Activated CD8-positive, alpha-beta T cell treated with anti-CD3 and anti-CD28 coated beads, Interleukin-2, amount 10 ng/mL, durations not matched to agents 7 days and 5 days (primary cell): ENCODE measurements at regions of chr2 and their contacts with region 1.

Region 1: DNA sequence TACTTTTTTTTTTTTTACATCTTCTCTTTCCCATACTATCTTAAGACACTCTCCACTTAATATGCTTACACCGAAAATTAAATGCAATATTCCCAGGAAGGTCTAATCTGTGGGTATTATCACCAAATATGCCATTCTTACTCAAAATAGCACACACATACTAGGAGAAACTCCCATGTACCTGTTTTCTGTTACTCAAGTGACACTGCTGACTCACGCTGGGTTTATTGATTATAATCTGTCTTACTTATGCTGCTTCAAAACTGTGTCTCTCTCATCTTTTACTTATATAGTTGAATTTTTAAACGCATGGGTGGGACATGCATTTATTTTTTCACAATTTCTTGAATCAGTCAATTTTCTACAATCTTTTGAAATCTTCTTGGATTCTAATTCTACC is 29.9 kb downstream of the MRPL19 start:
- DNase-seq: no peak
- ATAC-seq: no peak
- H3K4me3 Mint-ChIP-seq: no peak overlapping the region
- H3K27ac Mint-ChIP-seq: no peak overlapping the region
- H3K4me1 Mint-ChIP-seq: peaks cover 9% of the 10 kb centered on the region
- H3K27me3 Mint-ChIP-seq: no peaks in the 10 kb centered on the region

Region 2: GRCh38 chr2:75640621-75641121 is 35.8 kb before region 1 on chr2:
- CTCF ChIA-PET with region 1: interaction called, 49 read pairs
- POLR2A ChIA-PET with region 1: no interaction called
- DNase-seq: peak; percentile 61
- ATAC-seq: peak; percentile 93
- H3K4me3 Mint-ChIP-seq: no peak overlapping the region
- H3K27ac Mint-ChIP-seq: no peak overlapping the region
- H3K4me1 Mint-ChIP-seq: no peaks in the 10 kb centered on the region
- H3K27me3 Mint-ChIP-seq: peaks cover 15% of the 10 kb centered on the region

Region 3: GRCh38 chr2:75646583-75647425 is 29.7 kb before region 1 on chr2 and contains the start of gene MRPL19:
- CTCF ChIA-PET with region 1: interaction called, 49 read pairs
- POLR2A ChIA-PET with region 1: interaction called, 3 read pairs
- DNase-seq: peak; percentile 84
- ATAC-seq: peak; percentile 98
- H3K4me3 Mint-ChIP-seq: peak within 1 kb of the TSS; percentile 93
- H3K27ac Mint-ChIP-seq: peak within 1 kb of the TSS; percentile 92
- H3K4me1 Mint-ChIP-seq: peaks cover 30% of the 10 kb centered on the region
- H3K27me3 Mint-ChIP-seq: no peaks in the 10 kb centered on the region
- total RNA-seq, gene MRPL19: 39.5 to 42.4 TPM

Region 4: GRCh38 chr2:75655861-75656260 is 20.6 kb before region 1 on chr2:
- CTCF ChIA-PET with region 1: interaction called, 14 read pairs
- POLR2A ChIA-PET with region 1: no interaction called
- DNase-seq: no peak
- ATAC-seq: no peak
- H3K4me3 Mint-ChIP-seq: no peak overlapping the region
- H3K27ac Mint-ChIP-seq: no peak overlapping the region
- H3K4me1 Mint-ChIP-seq: peaks cover 3% of the 10 kb centered on the region
- H3K27me3 Mint-ChIP-seq: no peaks in the 10 kb centered on the region

Region 5: DNA sequence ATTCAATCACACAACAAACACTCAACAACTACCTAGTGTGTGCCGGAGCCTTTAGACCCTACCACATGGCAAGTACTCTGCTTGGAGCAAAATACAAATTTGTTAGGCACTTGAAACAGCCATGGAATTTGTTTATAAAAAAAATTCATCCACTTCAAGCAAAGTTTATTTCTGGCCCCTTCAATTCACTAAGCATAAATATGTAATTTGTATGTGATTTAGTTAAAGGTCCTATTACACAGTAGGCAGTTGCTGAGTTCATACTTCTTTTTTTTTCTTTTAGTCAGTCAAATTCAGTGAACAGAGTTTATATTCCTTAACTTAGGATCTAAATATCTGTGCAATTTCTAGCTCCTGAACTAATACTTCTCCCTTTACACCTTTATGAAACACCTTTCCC is 11.7 kb after region 1 on chr2:
- CTCF ChIA-PET with region 1: interaction called, 23 read pairs
- POLR2A ChIA-PET with region 1: no interaction called
- DNase-seq: no peak
- ATAC-seq: no peak
- H3K4me3 Mint-ChIP-seq: no peak overlapping the region
- H3K27ac Mint-ChIP-seq: no peak overlapping the region
- H3K4me1 Mint-ChIP-seq: no peaks in the 10 kb centered on the region
- H3K27me3 Mint-ChIP-seq: no peaks in the 10 kb centered on the region

Region 6: DNA sequence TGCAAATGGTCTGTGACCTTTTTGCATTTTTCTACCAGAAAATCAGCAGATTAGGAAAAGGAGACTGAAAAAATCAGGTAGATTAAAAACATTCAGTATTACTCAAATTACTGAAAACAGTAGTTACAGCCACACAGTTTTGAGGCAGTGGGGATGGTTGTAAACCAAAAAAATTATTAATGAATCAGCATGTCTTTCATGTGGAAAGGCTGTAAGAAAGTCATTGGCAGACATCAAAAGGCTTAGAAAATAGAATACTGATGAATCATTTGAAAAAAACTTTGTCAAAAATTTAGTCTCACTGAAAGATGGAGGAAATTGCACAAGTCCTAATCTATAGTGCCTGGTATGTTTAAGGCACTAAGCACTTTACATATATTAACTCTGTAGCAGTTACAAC is 168.2 kb after region 1 on chr2:
- CTCF ChIA-PET with region 1: no interaction called
- POLR2A ChIA-PET with region 1: no interaction called
- DNase-seq: no peak
- ATAC-seq: no peak
- H3K4me3 Mint-ChIP-seq: no peak overlapping the region
- H3K27ac Mint-ChIP-seq: no peak overlapping the region
- H3K4me1 Mint-ChIP-seq: no peaks in the 10 kb centered on the region
- H3K27me3 Mint-ChIP-seq: no peaks in the 10 kb centered on the region